Right ventricle myocardium inferior (tissue), 1 donor: ENCODE measurements at regions of chr1 and their contacts with region 1.

Region 1: GRCh38 chr1:6701437-6702153 is at the start of gene DNAJC11:
- DNase-seq: peak; percentile 94
- ATAC-seq: peak; percentile 97
- total RNA-seq, gene DNAJC11: 74.1 TPM

Region 2: GRCh38 chr1:6658359-6659060 is 43.1 kb before region 1 on chr1:
- intact Hi-C with region 1: loop called (anchors 5 kb)
- DNase-seq: no peak
- ATAC-seq: no peak

Region 3: GRCh38 chr1:6784560-6785317 is 83.1 kb after region 1 on chr1:
- intact Hi-C with region 1: loop called (anchors 5 kb)
- DNase-seq: peak; percentile 99
- ATAC-seq: peak; percentile 93